Activated CD4-positive, alpha-beta T cell treated with anti-CD3 and anti-CD28 coated beads for 36 hours (primary cell): ENCODE measurements at regions of chr11 and their contacts with region 1.

Region 1: DNA sequence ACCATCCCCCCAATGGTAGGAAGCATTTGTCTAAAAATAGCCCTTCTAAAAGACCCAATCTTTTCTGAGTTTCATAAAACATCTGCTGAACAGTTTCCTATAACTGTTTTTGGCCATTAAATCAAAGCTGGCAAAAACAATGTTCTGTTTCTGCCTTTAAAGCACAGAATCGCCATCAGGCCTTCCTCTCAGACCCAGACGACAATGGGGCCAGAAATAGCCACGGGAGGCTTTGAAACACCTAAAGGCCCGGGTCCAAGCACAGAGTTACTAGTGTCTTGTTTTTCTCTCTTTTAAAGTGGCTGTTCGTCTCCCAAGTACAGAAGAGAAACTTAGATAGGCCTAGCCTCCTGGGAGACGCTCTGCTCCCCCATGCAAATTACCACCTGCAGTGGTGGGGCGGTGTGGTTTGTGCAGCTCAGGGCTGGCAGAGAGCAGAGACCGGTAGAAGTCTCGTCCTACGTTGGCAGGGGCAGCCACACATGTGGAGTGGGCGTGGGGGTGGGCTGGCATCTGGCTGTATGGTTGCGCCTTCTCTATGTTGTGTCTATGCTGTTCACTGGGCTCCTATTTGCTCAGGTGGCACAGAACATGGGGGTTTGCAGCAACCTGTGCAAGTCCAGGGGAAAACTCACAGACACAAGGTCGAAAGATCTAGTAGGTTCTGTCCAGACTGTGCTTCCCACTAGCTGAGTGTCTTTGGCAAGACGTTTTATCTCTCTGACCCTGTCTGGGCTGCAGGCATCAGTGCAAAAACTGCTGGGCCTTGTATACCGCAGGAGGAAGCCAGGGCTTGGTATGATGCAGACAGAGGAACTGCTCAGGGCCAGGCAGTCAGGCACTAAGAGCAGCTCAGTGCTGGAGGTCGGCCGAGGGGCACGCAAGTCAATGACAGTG is 23.6 kb upstream of the ETS1 start:
- DNase-seq: peak; percentile 62
- ATAC-seq: peak; percentile 87
- H3K4me3 Mint-ChIP-seq: peak overlapping the region; percentile 51
- H3K27ac Mint-ChIP-seq: peak overlapping the region; percentile 96
- H3K4me1 Mint-ChIP-seq: peaks cover 45% of the 10 kb centered on the region
- H3K27me3 Mint-ChIP-seq: no peaks in the 10 kb centered on the region

Region 2: GRCh38 chr11:128624269-128625175 is 13.6 kb after region 1 on chr11:
- CTCF ChIA-PET with region 1: interaction called, 23 read pairs
- POLR2A ChIA-PET with region 1: interaction called, 3 read pairs
- intact Hi-C with region 1: loop called in 1 of 2 experiments (anchors 2 kb)
- DNase-seq: peak; percentile 70
- ATAC-seq: peak; percentile 35
- H3K4me3 Mint-ChIP-seq: peak overlapping the region; percentile 58
- H3K27ac Mint-ChIP-seq: peak overlapping the region; percentile 90
- H3K4me1 Mint-ChIP-seq: peaks cover 95% of the 10 kb centered on the region
- H3K27me3 Mint-ChIP-seq: no peaks in the 10 kb centered on the region